ENCODE measurements at regions of chr6 and their contacts with region 1.

Region 1: GRCh38 chr6:104525677-104526312 is 333.9 kb downstream of the HACE1 start:
- DNase-seq: peak; percentile 54
- H3K4me3 Mint-ChIP-seq: peak overlapping the region; percentile 49
- H3K27ac Mint-ChIP-seq: no peak overlapping the region
- H3K4me1 Mint-ChIP-seq: peaks cover 6% of the 10 kb centered on the region
- H3K27me3 Mint-ChIP-seq: peaks cover 5% of the 10 kb centered on the region

Region 2: GRCh38 chr6:103838457-103838856 is 687.3 kb before region 1 on chr6:
- intact Hi-C with region 1: no loop called
- DNase-seq: no peak
- H3K4me3 Mint-ChIP-seq: no peak overlapping the region
- H3K27ac Mint-ChIP-seq: no peak overlapping the region
- H3K4me1 Mint-ChIP-seq: no peaks in the 10 kb centered on the region
- H3K27me3 Mint-ChIP-seq: no peaks in the 10 kb centered on the region

Region 3: DNA sequence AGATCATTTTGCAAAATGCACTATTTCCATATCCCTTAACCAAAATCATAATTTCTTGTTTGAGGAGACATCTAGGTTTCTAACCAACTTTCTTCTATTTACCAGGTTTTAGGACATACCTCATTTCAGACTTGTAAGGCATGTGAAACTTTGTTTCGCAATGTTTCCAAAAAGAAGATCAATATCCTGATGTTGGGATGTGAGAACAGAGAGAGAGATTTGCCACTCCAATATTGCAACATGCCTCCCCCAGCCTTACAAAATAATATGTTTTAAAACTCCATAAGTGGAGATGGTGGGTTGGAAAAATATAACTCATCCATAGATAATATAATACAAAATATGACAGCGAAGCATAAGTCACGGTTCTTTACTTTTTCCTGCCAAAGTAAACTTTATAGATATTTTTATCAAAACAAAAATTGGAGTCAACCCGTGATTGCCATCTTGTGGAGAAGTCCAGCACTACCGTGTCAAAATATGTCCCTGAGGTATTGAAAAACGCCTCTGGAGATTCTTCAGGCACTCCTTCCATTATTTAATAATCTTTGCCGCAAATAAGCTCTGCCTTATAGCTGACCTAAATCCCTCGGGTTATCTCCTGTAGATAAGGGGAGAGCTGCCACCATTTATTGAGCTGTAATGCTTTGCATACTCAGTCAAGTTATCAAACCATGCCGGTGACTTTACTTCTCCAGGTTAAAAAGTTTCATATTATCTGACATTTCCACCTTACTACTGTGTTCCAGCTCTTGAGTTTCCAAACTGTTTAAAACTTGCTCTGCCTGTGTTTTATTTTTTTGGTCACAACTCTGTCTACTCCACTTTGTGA is 200.2 kb before region 1 on chr6:
- intact Hi-C with region 1: loop called (anchors 10 kb)
- DNase-seq: no peak
- H3K4me3 Mint-ChIP-seq: no peak overlapping the region
- H3K27ac Mint-ChIP-seq: no peak overlapping the region
- H3K4me1 Mint-ChIP-seq: no peaks in the 10 kb centered on the region
- H3K27me3 Mint-ChIP-seq: no peaks in the 10 kb centered on the region

Region 4: DNA sequence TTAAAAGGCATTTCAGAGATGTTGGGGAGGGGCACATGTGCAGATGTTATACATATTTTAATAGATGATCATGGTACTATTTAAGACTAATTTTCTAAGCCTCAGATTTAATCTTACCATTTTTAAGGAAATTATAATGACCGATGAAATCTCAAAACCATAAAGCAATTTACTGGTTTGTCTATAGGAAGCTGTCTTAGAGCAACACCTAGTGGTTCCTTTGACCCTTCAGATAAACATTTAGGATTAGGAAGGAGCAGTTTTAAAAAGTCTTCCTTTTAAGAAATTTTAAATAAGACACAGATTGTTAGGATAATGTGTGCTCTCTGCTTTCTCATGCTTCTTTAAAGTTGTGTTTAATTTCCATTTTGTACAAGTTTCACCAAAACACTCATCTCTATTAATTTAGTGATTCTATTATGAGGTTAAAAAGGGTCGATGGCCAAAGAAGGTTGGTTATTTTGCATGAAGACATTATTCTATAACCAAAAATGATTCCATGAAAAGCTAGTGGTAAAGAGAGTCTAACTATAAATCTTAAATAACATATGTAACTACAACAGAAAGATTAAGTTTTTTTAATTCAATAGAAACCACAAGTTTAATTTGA is 42.5 kb before region 1 on chr6:
- intact Hi-C with region 1: no loop called
- DNase-seq: no peak
- H3K4me3 Mint-ChIP-seq: no peak overlapping the region
- H3K27ac Mint-ChIP-seq: no peak overlapping the region
- H3K4me1 Mint-ChIP-seq: no peaks in the 10 kb centered on the region
- H3K27me3 Mint-ChIP-seq: no peaks in the 10 kb centered on the region

Region 5: DNA sequence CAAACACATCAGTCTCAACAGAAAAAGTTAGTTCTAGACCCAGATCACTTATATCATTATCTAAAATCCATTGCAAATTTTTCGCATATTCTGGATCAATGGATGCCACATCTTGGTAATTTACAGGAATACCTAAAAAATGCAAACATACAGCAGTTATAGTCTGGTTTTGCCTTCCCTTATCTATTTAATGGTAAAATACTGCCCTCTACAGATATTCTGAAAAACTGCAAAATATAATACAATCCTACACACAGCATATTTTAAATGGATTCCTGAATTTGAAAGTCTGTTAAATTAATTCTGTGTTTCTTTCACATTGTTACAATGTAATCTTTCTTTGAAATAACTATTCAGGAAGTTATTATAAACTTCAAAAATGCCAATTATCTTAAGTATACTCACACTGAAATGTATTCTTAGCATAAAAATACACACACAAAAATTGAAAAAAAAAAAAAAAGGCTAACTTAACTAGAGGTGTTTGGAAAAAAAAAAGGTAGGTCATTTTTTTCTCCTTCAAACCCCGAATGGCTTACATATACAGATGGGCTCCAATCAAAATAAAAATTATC is 245.6 kb after region 1 on chr6:
- intact Hi-C with region 1: loop called (anchors 1 kb)
- DNase-seq: no peak
- H3K4me3 Mint-ChIP-seq: no peak overlapping the region
- H3K27ac Mint-ChIP-seq: no peak overlapping the region
- H3K4me1 Mint-ChIP-seq: peaks cover 10% of the 10 kb centered on the region
- H3K27me3 Mint-ChIP-seq: no peaks in the 10 kb centered on the region